Activated naive CD4-positive, alpha-beta T cell treated with anti-CD3 and anti-CD28 coated beads for 36 hours (primary cell): ENCODE measurements at regions of chr9 and their contacts with region 1.

Region 1: DNA sequence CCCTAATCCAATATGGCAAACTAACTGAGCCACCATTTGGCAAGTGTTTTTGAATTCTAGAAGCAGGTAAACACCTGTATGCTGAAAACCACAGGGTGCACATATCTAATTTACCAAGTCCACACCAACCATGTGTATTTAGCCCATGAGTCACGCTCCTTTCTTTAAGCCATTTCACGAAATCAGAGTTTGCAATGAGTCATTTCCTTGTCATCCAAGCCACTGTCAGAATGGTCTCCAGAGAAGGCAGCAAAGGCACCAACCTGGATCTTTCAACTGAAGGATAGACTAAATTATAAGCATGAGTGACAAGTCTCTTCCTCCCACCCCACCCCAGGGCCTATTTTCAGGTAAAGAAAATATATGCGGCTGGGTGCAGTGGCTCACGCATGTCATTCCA is 110.0 kb downstream of the PAX5 start:
- DNase-seq: peak; percentile 58
- H3K4me3 Mint-ChIP-seq: no peak overlapping the region
- H3K27ac Mint-ChIP-seq: peak overlapping the region; percentile 31
- H3K4me1 Mint-ChIP-seq: peaks cover 27% of the 10 kb centered on the region
- H3K27me3 Mint-ChIP-seq: peaks cover 16% of the 10 kb centered on the region

Region 2: DNA sequence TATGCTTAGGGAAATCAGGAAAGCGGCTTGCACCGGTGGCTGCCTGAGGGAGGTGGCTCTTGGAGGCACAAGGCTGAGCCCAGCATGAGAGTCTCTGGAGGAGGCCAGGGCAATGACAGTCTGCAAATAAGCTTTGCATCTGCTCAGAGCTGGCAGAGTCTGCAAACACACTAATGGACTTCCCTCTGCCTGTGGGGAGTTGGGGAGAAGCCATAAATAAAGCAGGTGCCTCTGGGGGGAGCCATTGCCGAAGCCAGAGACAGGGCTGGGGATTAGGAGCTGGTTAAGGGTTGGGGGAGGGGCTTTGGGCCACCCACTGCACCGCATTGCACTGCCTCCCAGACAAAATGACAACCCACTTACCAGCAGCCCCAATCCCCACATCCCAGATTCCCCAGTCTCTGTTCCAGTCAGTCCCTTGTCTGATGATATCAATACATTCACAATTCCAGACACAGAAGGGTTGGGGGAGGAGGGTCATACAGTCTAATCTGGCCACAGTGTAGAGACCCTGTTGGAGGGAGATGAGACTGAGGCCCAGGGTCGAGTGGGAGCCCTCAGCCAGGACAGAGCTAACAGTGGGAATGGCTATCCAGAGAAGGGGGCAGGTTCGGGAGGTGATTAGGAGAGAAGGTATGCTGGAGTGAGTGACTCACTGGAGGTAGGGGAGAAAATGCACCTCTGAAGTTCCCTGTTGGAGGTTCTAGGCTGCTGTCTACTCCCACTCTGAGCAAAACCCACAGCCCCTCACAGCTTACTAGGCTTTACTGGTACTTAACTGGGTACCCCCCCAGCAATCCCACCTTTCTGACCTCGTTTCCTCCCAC is 56.3 kb after region 1 on chr9:
- CTCF ChIA-PET with region 1: no interaction called
- intact Hi-C with region 1: loop called (anchors 10 kb)
- DNase-seq: peak; percentile 26
- H3K4me3 Mint-ChIP-seq: no peak overlapping the region
- H3K27ac Mint-ChIP-seq: no peak overlapping the region
- H3K4me1 Mint-ChIP-seq: peaks cover under 1% of the 10 kb centered on the region
- H3K27me3 Mint-ChIP-seq: peaks cover 38% of the 10 kb centered on the region

Region 3: GRCh38 chr9:37302277-37302676 is 378.2 kb after region 1 on chr9:
- CTCF ChIA-PET with region 1: no interaction called
- intact Hi-C with region 1: loop called (anchors 5 kb)
- DNase-seq: peak; percentile 70
- H3K4me3 Mint-ChIP-seq: peak overlapping the region; percentile 25
- H3K27ac Mint-ChIP-seq: peak overlapping the region; percentile 92
- H3K4me1 Mint-ChIP-seq: peaks cover 59% of the 10 kb centered on the region
- H3K27me3 Mint-ChIP-seq: no peaks in the 10 kb centered on the region